HEK293T (cell line): ENCODE measurements at regions of chr6 and their contacts with region 1.

Region 1: GRCh38 chr6:116279260-116280063 is at the start of gene TSPYL1:
- DNase-seq: peak; percentile 95

Region 2: GRCh38 chr6:116190550-116190949 is 88.9 kb before region 1 on chr6:
- CTCF ChIA-PET with region 1: no interaction called
- POLR2A ChIA-PET with region 1: no interaction called
- DNase-seq: no peak

Region 3: GRCh38 chr6:116253505-116254296 is 25.8 kb before region 1 on chr6 and contains the start of gene TSPYL4:
- CTCF ChIA-PET with region 1: no interaction called
- POLR2A ChIA-PET with region 1: interaction called, 18 read pairs
- DNase-seq: peak; percentile 96

Region 4: GRCh38 chr6:116570856-116571682 is 291.6 kb after region 1 on chr6 and contains the start of gene RWDD1:
- CTCF ChIA-PET with region 1: no interaction called
- POLR2A ChIA-PET with region 1: interaction called, 20 read pairs
- DNase-seq: peak; percentile 98